ENCODE measurements at regions of chr4 and their contacts with region 1.

Region 1: GRCh38 chr4:102449751-102450352 is 51.3 kb upstream of the NFKB1 start:
- DNase-seq: peak; percentile 69
- ATAC-seq: peak; percentile 86
- H3K4me3 Mint-ChIP-seq: no peak overlapping the region
- H3K27ac Mint-ChIP-seq: no peak overlapping the region
- H3K4me1 Mint-ChIP-seq: peaks cover 54% of the 10 kb centered on the region
- H3K27me3 Mint-ChIP-seq: no peaks in the 10 kb centered on the region

Region 2: DNA sequence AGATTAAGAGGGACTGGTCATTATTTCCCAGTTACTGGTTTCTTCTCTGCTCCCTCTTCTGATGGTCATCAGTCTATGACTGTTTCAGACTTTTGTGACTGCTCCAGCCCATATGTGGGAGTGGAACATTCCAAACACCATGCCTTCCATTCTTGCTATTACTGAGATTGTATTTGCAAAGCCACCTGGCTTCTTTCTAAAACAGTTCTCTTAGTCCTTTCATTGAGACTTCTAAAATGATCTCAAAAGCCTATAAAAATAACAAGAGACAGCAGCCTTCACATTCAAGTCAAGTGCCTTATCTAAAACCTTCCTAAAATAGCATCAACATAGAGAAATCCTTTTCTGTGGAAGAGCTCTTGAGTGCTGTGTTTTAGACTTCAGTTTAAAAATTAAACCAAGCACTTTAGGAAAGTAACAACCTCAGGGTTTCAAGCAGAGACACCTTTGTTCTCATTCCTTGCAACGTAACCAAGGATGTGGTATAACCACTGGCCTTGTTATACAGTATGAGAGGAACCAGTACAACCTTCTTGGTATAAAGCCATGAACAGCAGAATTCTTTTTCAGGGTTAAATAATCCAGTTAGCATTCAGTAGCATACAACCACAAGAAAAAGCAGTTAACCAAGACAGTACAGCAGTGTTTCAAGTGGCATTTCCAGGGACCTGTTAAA is 148.4 kb after region 1 on chr4:
- CTCF ChIA-PET with region 1: no interaction called
- POLR2A ChIA-PET with region 1: no interaction called
- intact Hi-C with region 1: no loop called
- DNase-seq: no peak
- ATAC-seq: peak; percentile 68
- H3K4me3 Mint-ChIP-seq: peak overlapping the region; percentile 18
- H3K27ac Mint-ChIP-seq: peak overlapping the region; percentile 90
- H3K4me1 Mint-ChIP-seq: peaks cover 70% of the 10 kb centered on the region
- H3K27me3 Mint-ChIP-seq: no peaks in the 10 kb centered on the region

Region 3: DNA sequence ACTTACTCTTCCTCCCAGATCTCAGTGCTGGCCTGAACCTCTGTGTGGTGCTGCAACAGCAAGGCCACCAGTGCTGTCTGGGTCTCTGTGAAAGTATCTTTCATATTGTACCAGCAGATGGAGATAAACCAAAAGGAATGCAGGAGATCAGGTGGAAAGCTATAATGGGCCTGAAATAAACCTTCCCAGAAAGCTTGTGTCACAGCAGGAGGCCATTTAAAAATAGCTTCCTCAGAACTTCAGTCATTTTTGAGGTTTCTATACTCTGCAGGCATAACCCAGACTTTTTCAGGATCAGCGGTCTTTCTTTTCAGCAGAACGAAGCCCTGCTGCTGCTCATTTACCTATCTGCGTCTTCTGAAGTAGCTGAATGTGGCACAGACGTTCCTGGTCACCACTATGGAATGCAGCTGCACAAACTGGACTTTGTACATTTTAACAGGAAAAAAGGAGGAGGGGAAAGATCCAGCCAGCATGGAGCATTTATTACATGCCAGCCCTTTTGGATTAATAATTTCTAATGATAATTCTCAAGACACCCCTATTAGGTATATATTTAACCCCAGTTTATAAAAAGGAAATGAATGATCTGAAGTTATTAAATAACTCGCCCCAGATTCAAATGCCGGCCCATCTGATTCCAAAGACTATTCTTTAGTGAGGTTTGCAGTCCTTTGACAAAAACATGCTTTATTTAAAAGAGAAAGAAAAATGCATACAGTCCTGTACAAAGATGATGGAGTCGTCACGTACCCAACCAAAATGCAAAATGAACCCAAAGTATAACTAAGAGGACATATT is 171.0 kb after region 1 on chr4:
- CTCF ChIA-PET with region 1: interaction called, 16 read pairs
- POLR2A ChIA-PET with region 1: no interaction called
- intact Hi-C with region 1: loop called (anchors 1 kb)
- DNase-seq: peak; percentile 30
- ATAC-seq: peak; percentile 25
- H3K4me3 Mint-ChIP-seq: no peak overlapping the region
- H3K27ac Mint-ChIP-seq: peak overlapping the region; percentile 47
- H3K4me1 Mint-ChIP-seq: peaks cover 50% of the 10 kb centered on the region
- H3K27me3 Mint-ChIP-seq: no peaks in the 10 kb centered on the region

Region 4: DNA sequence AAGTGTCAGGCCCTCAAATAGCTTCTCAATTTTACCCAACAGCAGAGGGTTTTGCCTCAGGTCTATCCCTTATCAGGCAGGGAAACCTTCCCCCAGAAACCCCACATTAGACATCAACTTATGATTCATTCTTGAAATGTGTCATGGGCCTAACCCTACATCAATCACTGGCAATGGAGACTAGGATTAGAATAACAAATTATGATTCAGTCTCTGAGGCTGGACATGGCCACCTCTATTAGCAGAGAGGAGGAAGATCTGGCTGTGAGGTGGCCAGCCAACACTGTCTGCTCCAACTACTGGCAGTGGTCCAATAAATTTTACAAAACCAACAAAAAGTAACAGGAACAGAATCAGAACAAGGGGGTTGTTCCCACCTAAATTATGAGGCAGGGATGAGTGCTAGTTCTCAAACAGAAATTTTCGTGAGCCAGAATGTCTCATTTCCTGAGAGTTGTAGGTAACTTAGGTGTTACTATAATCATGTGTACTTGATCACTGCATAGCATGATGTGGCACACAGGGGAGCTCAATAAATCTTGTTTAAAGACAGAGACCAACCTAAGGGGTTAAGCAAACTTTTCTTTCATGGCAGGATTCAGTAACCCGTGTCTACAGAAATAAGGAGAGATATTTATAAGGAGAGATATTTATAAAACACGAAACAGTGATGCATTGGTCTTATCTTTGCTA is 178.1 kb after region 1 on chr4:
- CTCF ChIA-PET with region 1: interaction called, 16 read pairs
- POLR2A ChIA-PET with region 1: no interaction called
- intact Hi-C with region 1: loop called (anchors 1 kb)
- DNase-seq: peak; percentile 48
- ATAC-seq: peak; percentile 85
- H3K4me3 Mint-ChIP-seq: peak overlapping the region; percentile 50
- H3K27ac Mint-ChIP-seq: peak overlapping the region; percentile 86
- H3K4me1 Mint-ChIP-seq: peaks cover 69% of the 10 kb centered on the region
- H3K27me3 Mint-ChIP-seq: no peaks in the 10 kb centered on the region

Region 5: DNA sequence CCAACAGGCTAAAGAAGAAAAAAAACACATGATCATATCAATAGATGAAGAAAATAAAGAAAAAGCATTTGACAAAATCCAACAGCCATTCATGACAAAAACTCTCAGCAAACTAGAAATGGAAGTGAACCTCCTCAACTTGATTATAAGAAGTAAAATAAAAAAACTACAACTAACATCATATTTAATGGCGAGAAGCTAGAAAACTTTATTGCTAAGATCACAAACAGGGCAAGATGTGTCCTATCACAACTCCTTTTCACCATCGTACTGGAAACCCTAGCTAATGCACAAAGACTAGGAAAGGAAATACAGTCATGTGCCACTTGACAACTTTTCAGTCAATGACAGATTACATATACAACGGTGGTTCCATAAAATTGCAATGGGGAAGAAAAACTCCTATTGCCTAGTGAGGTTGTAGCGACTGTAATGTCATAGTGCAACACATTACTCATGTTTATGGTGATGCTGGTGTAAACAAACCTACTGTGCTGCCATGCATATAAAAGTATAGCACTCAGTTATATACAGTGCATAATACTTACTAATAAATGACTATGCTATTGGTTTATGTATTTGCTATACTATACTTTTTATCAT is 323.0 kb after region 1 on chr4:
- CTCF ChIA-PET with region 1: no interaction called
- POLR2A ChIA-PET with region 1: no interaction called
- intact Hi-C with region 1: no loop called
- DNase-seq: no peak
- ATAC-seq: no peak
- H3K4me3 Mint-ChIP-seq: no peak overlapping the region
- H3K27ac Mint-ChIP-seq: no peak overlapping the region
- H3K4me1 Mint-ChIP-seq: no peaks in the 10 kb centered on the region
- H3K27me3 Mint-ChIP-seq: peaks cover 2% of the 10 kb centered on the region

Region 6: DNA sequence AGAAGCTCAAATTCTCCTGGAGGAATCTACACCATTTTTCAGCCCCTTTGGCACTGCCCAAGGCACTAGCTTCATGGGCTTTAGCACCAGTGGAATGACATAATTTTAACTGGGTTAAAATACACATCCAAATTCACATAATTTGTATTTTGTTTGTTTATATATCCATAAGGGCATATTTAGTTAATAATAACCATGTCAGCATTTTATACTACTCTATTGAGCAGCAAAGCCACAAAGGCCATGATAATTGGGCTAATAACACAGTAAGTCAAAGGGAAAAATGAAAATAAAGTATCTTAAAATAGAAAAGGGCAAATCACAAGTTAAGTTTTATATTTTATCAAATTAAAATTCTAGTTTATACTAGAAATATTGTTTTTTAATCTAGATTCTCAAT is 1532.6 kb after region 1 on chr4:
- CTCF ChIA-PET with region 1: no interaction called
- POLR2A ChIA-PET with region 1: no interaction called
- intact Hi-C with region 1: no loop called
- DNase-seq: no peak
- ATAC-seq: no peak
- H3K4me3 Mint-ChIP-seq: no peak overlapping the region
- H3K27ac Mint-ChIP-seq: no peak overlapping the region
- H3K4me1 Mint-ChIP-seq: no peaks in the 10 kb centered on the region
- H3K27me3 Mint-ChIP-seq: no peaks in the 10 kb centered on the region